GM12878 (cell line): ENCODE measurements at regions of chr4 and their contacts with region 1.

Region 1: GRCh38 chr4:52665592-52665991 is 6.5 kb upstream of the USP46 start:
- DNase-seq: no peak
- ATAC-seq: peak; percentile 94
- H3K4me3 ChIP-seq: no peak overlapping the region
- H3K27ac ChIP-seq: no peak overlapping the region
- H3K4me1 ChIP-seq: 0 out of 2 replicates have a peak, but pooled peaks cover 2% of the 10 kb centered on the region
- H3K27me3 ChIP-seq: no peaks in the 10 kb centered on the region
- CTCF ChIP-seq: peak; percentile 50 to 76 (median 52); a peak in 5 of 6 replicates
- EP300 ChIP-seq: no peak
- POLR2A ChIP-seq: no peak
- RAD21 ChIP-seq: peak; percentile 87

Region 2: DNA sequence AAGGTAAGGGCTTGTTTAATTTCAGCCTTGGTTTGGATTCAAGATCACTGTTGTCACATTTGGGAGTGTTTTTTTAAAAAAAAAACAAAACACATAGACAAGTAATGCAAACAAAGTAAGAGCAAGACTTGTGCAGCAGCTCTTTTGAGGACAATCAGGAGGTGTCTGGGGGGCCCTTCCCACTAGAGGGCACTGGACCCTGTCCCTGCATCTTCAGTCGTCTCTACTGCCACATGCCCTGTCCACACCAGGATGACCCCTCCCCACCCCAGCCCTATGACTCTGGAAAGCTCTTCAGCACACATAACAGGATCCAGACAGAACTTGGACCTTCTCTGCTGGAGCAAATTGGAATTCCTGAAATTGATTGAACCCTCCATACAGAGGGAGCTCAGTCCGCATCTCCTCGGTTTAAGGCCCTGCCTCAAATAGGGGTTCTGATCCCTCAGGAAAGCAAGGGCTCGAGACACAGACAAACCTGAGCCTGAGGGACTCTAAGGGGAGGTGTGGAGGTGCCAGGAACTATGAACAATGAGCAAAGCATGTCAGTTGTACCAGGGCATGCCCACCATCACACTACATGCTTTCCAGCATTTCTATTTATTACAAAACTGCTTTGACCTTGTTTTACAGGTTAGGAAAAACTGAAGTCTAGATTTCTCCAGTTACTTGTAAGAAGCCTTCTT is 77.4 kb before region 1 on chr4:
- CTCF ChIA-PET with region 1: interaction called, 29 read pairs
- POLR2A ChIA-PET with region 1: no interaction called
- RAD21 ChIA-PET with region 1: interaction called, 16 read pairs
- SMC1A ChIA-PET with region 1: interaction called, 9 read pairs
- in situ Hi-C with region 1: no loop called
- intact Hi-C with region 1: loop called (anchors 1 kb)
- DNase-seq: no peak
- ATAC-seq: peak; percentile 92
- H3K4me3 ChIP-seq: no peak overlapping the region
- H3K27ac ChIP-seq: no peak overlapping the region
- H3K4me1 ChIP-seq: no peaks in the 10 kb centered on the region
- H3K27me3 ChIP-seq: no peaks in the 10 kb centered on the region
- CTCF ChIP-seq: peak; percentile 54 to 69 (median 56)
- EP300 ChIP-seq: no peak
- POLR2A ChIP-seq: no peak
- RAD21 ChIP-seq: peak; percentile 68